ENCODE measurements at regions of chrX and their contacts with region 1.

Region 1: GRCh38 chrX:38458071-38458470 is 103.3 kb upstream of the TSPAN7 start:
- DNase-seq: no peak
- H3K4me3 ChIP-seq: no peak overlapping the region
- H3K27ac ChIP-seq: no peak overlapping the region
- H3K4me1 ChIP-seq: no peaks in the 10 kb centered on the region
- H3K27me3 ChIP-seq: no peaks in the 10 kb centered on the region
- CTCF ChIP-seq: peak; percentile 16 to 53

Region 2: DNA sequence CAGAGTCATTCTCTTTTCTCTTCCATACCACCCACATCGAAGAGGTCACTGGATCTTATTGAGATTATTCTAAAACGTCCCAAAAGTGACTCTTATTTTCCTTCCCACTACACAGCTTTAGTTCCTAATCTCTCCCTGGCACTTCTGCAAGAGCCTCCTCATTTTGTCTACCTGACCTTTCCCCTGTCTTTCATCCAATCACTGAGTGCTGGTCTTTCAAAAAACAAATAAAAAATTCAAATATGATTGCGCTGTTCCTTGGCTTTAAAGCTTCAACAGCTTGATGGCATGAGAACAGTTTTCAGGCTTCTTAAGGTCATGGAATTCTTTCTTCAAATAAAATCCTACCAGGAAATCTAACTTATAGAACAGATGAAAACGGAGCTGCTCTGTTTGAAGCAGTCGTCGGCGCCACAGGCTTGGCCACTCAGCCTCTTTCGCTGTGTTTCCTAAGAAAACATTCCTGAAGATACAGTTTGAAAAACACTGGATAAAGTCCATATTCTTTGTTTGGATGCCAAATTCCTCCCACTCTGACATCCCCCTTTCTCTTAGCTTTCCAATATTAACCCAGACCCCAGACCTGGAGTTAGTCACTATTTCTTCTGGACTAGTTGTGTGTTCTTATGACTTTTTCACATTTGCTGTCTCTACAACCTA is 439.2 kb before region 1 on chrX:
- CTCF ChIA-PET with region 1: no interaction called
- dilution Hi-C with region 1: no loop called
- in situ Hi-C with region 1: no loop called
- intact Hi-C with region 1: no loop called
- DNase-seq: no peak
- H3K4me3 ChIP-seq: no peak overlapping the region
- H3K27ac ChIP-seq: no peak overlapping the region
- H3K4me1 ChIP-seq: no peaks in the 10 kb centered on the region
- H3K27me3 ChIP-seq: no peaks in the 10 kb centered on the region
- CTCF ChIP-seq: no peak

Region 3: DNA sequence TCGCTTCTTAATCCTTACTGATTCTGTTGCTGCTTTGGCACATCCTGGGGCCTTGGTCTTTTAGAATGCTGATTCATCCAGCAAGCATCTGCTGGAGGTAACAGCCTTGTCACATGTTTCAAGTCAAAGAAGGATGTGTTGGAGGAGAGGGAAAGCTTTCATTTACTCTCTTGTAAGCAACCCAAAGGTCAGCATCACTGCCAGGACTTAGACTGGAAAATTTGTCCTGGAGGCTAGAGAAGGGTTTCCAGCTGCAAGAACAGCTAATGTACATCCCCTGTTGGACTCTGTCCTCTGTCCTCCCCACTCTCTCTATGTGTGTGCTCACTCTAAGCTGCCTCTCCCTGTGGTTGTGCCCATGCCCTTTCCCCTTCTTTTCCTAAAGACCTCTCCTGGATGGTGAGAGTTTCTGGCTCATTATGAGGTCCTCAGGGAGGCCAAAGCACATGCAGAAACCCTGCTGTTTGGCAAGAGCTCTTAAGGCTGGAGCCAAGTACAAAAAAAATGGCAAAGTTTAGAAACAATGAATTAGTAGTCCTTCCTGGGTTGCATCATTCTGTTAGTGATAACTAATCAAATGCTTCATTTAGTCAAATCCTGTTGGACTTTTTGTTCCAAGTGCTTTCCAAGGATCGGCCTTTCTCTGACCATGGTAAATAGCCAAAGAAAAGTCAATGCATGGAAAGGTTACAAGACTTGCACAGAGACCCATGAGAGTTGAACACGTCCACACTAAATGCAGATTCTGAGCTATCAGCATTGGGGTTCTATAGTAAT is 224.0 kb before region 1 on chrX:
- CTCF ChIA-PET with region 1: no interaction called
- dilution Hi-C with region 1: no loop called
- in situ Hi-C with region 1: no loop called
- intact Hi-C with region 1: no loop called
- DNase-seq: peak; percentile 61
- H3K4me3 ChIP-seq: no peak overlapping the region
- H3K27ac ChIP-seq: peak overlapping the region; percentile 31
- H3K4me1 ChIP-seq: peaks cover 33% of the 10 kb centered on the region
- H3K27me3 ChIP-seq: no peaks in the 10 kb centered on the region
- CTCF ChIP-seq: no peak

Region 4: GRCh38 chrX:38627683-38628082 is 169.6 kb after region 1 on chrX:
- CTCF ChIA-PET with region 1: no interaction called
- dilution Hi-C with region 1: no loop called
- in situ Hi-C with region 1: loop called in 1 of 2 experiments (anchors 25 kb)
- intact Hi-C with region 1: no loop called
- DNase-seq: peak; percentile 19
- H3K4me3 ChIP-seq: no peak overlapping the region
- H3K27ac ChIP-seq: no peak overlapping the region
- H3K4me1 ChIP-seq: no peaks in the 10 kb centered on the region
- H3K27me3 ChIP-seq: peaks cover 3% of the 10 kb centered on the region
- CTCF ChIP-seq: peak; percentile 56 to 69

Region 5: DNA sequence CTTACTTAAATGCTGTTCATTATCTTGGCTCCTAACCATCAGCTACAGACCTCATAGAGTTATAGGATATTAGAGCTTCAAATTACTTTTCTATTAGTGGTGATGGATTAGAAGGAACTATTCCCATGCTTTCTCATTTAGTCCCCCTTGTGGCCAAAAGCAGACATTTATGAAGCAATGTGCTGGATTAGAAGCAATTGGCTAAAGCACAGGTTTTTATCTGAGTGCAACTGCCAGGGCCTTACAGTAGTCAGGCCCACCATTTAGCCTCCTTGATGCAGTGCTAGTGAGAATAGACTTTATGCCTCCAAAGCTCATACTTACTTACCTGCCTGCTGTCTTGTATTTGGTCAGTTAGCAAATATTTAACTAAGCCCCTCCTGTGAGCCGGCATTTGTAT is 196.2 kb after region 1 on chrX:
- CTCF ChIA-PET with region 1: no interaction called
- dilution Hi-C with region 1: no loop called
- in situ Hi-C with region 1: loop called in 1 of 2 experiments (anchors 25 kb)
- intact Hi-C with region 1: loop called (anchors 1 kb)
- DNase-seq: peak; percentile 28
- H3K4me3 ChIP-seq: no peak overlapping the region
- H3K27ac ChIP-seq: no peak overlapping the region
- H3K4me1 ChIP-seq: no peaks in the 10 kb centered on the region
- H3K27me3 ChIP-seq: peaks cover 6% of the 10 kb centered on the region
- CTCF ChIP-seq: peak; percentile 59 to 65